ENCODE measurements at regions of chr1 and their contacts with region 1.

Region 1: GRCh38 chr1:49213301-49213700 is 436.6 kb upstream of the BEND5 start:
- DNase-seq: no peak
- H3K4me3 ChIP-seq: no peak overlapping the region
- H3K27ac ChIP-seq: no peak overlapping the region
- H3K4me1 ChIP-seq: no peaks in the 10 kb centered on the region
- H3K27me3 ChIP-seq: no peaks in the 10 kb centered on the region
- CTCF ChIP-seq: no peak

Region 2: GRCh38 chr1:49181033-49181432 is 32.3 kb before region 1 on chr1:
- intact Hi-C with region 1: no loop called
- DNase-seq: no peak
- H3K4me3 ChIP-seq: no peak overlapping the region
- H3K27ac ChIP-seq: no peak overlapping the region
- H3K4me1 ChIP-seq: no peaks in the 10 kb centered on the region
- H3K27me3 ChIP-seq: no peaks in the 10 kb centered on the region
- CTCF ChIP-seq: no peak

Region 3: DNA sequence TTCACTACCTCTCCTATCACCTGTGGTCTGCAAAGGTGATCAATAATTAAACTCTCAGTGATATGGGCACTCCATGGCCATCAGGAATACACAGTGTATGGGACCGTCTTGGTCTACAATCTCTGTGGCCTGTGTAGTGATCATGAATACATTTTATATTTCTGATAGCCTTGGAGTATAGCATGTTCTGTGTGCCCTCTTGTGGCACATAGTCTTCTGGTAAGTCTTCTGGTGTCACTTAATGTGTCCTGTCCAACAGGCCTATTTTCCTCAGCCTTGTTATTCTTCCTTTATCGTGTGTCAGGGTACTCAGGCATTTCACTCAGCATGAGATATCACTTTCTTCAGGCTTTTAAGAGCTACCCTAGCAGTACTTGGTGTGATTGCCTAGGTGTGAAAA is 416.9 kb after region 1 on chr1:
- intact Hi-C with region 1: loop called (anchors 5 kb)
- DNase-seq: no peak
- H3K4me3 ChIP-seq: no peak overlapping the region
- H3K27ac ChIP-seq: no peak overlapping the region
- H3K4me1 ChIP-seq: no peaks in the 10 kb centered on the region
- H3K27me3 ChIP-seq: no peaks in the 10 kb centered on the region
- CTCF ChIP-seq: no peak